SK-N-SH (cell line): ENCODE measurements at regions of chr14 and their contacts with region 1.

Region 1: DNA sequence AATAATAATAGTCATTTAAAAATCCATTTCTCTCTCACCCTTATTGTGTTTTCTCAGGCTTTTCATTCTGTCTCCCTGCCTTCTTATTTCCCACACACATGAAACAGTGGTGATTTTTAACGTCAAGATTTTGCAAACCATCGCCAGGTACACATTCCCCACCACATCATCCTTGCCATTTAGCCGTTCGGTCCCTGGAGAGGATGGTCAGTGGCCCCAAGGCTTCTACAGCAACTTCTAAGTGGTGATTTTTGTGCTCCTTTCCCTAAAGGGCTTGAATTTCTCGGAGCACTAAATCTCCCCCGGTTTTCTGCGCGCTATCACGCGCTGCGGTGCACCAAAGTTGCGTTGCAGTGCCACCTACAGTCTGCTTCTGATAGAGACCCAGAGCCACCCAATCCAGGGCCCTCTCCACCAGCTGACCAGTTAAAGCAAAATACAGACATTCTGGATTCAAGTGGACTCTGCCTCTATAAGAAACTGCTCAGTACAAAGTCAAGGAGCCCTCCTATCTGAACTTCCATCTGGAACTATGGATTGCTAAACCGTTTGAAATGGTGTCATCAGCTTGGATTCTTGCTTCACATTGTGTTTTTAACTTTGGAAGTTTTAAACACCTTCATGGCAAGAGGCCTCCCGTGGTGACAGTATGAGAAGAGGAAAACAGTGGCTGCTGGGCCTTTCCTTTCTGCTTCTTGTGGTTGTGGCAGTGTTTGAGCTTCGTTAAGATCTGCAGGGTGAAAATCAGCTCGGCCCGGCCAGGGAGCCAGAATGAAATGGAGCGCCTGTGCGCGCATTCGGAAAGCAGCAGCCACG is 234.0 kb downstream of the SPTSSA start:
- DNase-seq: peak; percentile 81
- H3K4me3 ChIP-seq: peak overlapping the region; percentile 12 to 23; a peak in 2 of 4 replicates
- H3K27ac ChIP-seq: no peak overlapping the region
- H3K4me1 ChIP-seq: peaks cover 0 to 2% of the 10 kb centered on the region in 2 experiments; a peak in 1 of 4 replicates
- H3K27me3 ChIP-seq: peaks cover 6% of the 10 kb centered on the region; the same call in 1 of the 2 replicates
- CTCF ChIP-seq: peak; percentile 83
- EP300 ChIP-seq: no peak
- RAD21 ChIP-seq: peak; percentile 84

Region 2: DNA sequence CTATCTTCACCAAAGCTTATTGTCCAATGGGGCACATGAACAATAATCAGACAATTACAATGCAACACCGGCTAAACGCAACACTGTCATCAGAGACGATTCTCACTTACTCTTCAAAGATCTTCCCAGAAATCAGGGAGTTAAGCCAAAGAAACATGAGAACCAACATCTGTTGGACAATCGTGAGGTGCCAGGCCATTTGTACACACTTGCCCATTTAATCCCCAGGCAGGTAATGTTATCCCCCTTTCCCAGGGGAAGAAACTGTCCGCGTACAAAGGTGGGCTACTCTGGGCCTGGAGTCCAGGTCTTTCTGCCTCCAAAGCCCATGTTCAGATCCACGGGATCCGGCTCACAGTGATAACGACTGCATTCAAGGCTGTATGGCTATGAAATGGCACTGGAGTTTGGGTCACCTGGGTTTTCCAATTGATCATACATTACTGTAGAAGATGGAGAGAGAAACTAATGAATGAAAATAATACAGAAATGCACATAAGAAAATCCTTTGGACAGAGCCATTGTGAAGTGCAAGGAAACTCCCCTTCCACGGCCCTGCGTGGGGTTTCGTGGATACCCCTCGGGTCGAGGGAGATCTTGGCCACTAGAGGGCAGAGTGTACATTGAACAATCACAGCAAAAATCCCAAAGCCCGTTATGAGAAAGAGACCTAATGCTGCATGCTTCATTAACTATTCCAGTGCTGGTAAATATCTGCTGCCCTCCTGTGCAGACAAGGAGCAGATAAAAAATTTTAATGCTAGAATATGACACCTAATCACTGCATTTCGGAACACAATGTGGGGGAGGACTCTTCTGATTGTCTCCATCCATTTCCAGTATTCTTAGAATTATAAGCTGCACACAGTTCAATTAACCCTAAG is 388.6 kb before region 1 on chr14:
- CTCF ChIA-PET with region 1: interaction called, 10 read pairs
- POLR2A ChIA-PET with region 1: no interaction called
- DNase-seq: peak; percentile 76
- H3K4me3 ChIP-seq: no peak overlapping the region; a peak in 1 of 4 replicates
- H3K27ac ChIP-seq: no peak overlapping the region
- H3K4me1 ChIP-seq: no peaks in the 10 kb centered on the region; a peak in 1 of 4 replicates
- H3K27me3 ChIP-seq: peaks cover 6% of the 10 kb centered on the region; the same call in 1 of the 2 replicates
- CTCF ChIP-seq: peak; percentile 87
- EP300 ChIP-seq: no peak
- RAD21 ChIP-seq: peak; percentile 88

Region 3: GRCh38 chr14:34214961-34215360 is 13.1 kb before region 1 on chr14:
- CTCF ChIA-PET with region 1: interaction called, 16 read pairs
- POLR2A ChIA-PET with region 1: no interaction called
- DNase-seq: no peak
- H3K4me3 ChIP-seq: no peak overlapping the region
- H3K27ac ChIP-seq: no peak overlapping the region
- H3K4me1 ChIP-seq: no peaks in the 10 kb centered on the region; a peak in 1 of 4 replicates
- H3K27me3 ChIP-seq: 0 out of 2 replicates have a peak, but pooled peaks cover 11% of the 10 kb centered on the region
- CTCF ChIP-seq: no peak
- EP300 ChIP-seq: no peak
- RAD21 ChIP-seq: no peak

Region 4: DNA sequence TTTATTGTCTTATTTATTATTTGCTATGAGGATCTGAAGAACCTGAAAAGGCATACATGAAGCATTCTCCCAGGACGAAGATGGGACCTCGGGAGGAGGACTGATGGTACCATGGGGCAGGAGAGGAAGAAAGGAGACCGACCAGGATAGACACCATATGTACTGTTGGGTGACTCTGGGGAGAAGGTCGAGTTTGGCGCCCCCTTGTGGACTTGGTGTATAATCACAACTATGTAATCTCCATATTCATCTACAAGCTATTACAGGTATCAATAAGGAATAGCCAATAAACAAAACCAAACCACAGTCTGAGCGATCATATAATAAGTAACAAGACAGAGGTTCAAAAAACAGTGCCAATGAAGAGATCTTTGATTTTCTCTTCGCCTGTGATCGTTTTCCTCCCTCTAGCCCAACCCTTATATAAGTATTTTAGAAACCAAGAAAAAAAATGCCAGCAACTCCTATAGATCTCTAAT is 94.9 kb after region 1 on chr14:
- CTCF ChIA-PET with region 1: interaction called, 11 read pairs
- POLR2A ChIA-PET with region 1: no interaction called
- DNase-seq: peak; percentile 70
- H3K4me3 ChIP-seq: no peak overlapping the region
- H3K27ac ChIP-seq: no peak overlapping the region
- H3K4me1 ChIP-seq: no peaks in the 10 kb centered on the region
- H3K27me3 ChIP-seq: no peaks in the 10 kb centered on the region
- CTCF ChIP-seq: peak; percentile 87
- EP300 ChIP-seq: no peak
- RAD21 ChIP-seq: peak; percentile 32